ENCODE measurements at regions of chr3 and their contacts with region 1.

Region 1: DNA sequence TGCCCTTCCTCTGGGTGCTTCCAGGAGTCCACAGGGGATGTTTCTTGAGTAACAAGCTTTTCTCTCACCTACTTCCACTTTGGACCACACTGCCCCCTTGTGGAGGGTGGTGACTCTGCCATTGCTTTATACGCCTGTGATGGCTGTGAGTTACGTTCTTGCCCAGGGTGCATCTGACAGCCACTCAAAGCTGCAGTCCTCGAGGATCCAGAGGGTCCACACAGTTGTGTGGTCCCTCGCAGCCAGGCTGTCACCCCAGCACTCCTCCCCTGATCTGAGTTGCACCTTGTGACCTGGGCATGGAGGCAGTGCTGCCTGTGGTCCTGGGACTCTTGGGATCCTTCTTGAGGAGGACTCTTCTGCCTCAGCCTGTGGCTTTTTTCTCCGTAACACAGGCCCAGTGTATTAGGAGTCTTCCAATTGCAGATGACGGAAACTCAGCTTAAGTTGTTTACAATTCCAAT is 23.4 kb downstream of the FOXL2 start:
- DNase-seq: peak; percentile 83
- ATAC-seq: peak; percentile 77
- H3K4me3 ChIP-seq: no peak overlapping the region
- H3K27ac ChIP-seq: no peak overlapping the region
- H3K4me1 ChIP-seq: peaks cover 9% of the 10 kb centered on the region
- H3K27me3 ChIP-seq: peaks cover 5% of the 10 kb centered on the region; the same call in 1 of the 2 replicates
- CTCF ChIP-seq: peak; percentile 89
- POLR2A ChIP-seq: no peak
- RAD21 ChIP-seq: peak; percentile 80

Region 2: GRCh38 chr3:138329127-138329983 is 594.2 kb before region 1 on chr3 and contains the start of gene NME9:
- CTCF ChIA-PET with region 1: interaction called, 3 read pairs
- POLR2A ChIA-PET with region 1: no interaction called
- dilution Hi-C with region 1: no loop called
- in situ Hi-C with region 1: no loop called
- intact Hi-C with region 1: loop called (anchors 5 kb)
- DNase-seq: peak; percentile 73
- ATAC-seq: peak; percentile 97
- H3K4me3 ChIP-seq: peak within 1 kb of the TSS; percentile 62
- H3K27ac ChIP-seq: no peak within 1 kb of the TSS
- H3K4me1 ChIP-seq: no peaks in the 10 kb centered on the region
- H3K27me3 ChIP-seq: peaks cover under 1% of the 10 kb centered on the region
- CTCF ChIP-seq: peak; percentile 50
- POLR2A ChIP-seq: no peak
- RAD21 ChIP-seq: peak; percentile 36
- total RNA-seq, gene NME9: not detected in 2 replicates

Region 3: DNA sequence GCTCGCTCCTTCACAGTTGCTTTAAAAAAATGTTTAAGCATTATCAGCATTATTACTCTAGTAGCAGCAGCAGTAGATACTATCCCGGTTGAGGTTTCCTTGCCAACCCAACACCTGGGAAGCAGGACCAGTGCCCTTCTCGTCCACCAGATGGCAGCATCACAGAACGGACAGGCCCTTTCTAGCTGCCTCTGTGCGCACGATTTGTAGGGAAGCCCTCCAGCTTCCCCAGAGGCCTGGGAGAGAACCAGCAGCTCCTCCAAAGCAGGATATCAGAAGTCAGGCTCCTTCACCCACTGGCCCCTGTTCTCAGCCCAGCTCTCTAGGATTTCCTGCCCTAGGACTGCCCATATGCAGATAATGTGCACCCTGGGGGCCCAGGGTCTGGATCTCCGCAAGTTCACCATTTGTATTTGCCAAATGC is 506.0 kb before region 1 on chr3:
- CTCF ChIA-PET with region 1: interaction called, 6 read pairs
- POLR2A ChIA-PET with region 1: no interaction called
- dilution Hi-C with region 1: no loop called
- in situ Hi-C with region 1: no loop called
- intact Hi-C with region 1: loop called (anchors 1 kb)
- DNase-seq: peak; percentile 80
- ATAC-seq: peak; percentile 93
- H3K4me3 ChIP-seq: no peak overlapping the region
- H3K27ac ChIP-seq: no peak overlapping the region
- H3K4me1 ChIP-seq: peaks cover 8% of the 10 kb centered on the region
- H3K27me3 ChIP-seq: peaks cover 4% of the 10 kb centered on the region; the same call in 1 of the 2 replicates
- CTCF ChIP-seq: peak; percentile 92
- POLR2A ChIP-seq: no peak
- RAD21 ChIP-seq: peak; percentile 84

Region 4: GRCh38 chr3:138479438-138479863 is 444.1 kb before region 1 on chr3:
- CTCF ChIA-PET with region 1: interaction called, 9 read pairs
- POLR2A ChIA-PET with region 1: interaction called, 6 read pairs
- dilution Hi-C with region 1: no loop called
- in situ Hi-C with region 1: no loop called
- intact Hi-C with region 1: loop called (anchors 2 kb)
- DNase-seq: peak; percentile 46
- ATAC-seq: peak; percentile 79
- H3K4me3 ChIP-seq: no peak overlapping the region
- H3K27ac ChIP-seq: no peak overlapping the region
- H3K4me1 ChIP-seq: no peaks in the 10 kb centered on the region
- H3K27me3 ChIP-seq: no peaks in the 10 kb centered on the region
- CTCF ChIP-seq: peak; percentile 70
- POLR2A ChIP-seq: no peak
- RAD21 ChIP-seq: peak; percentile 72

Region 5: DNA sequence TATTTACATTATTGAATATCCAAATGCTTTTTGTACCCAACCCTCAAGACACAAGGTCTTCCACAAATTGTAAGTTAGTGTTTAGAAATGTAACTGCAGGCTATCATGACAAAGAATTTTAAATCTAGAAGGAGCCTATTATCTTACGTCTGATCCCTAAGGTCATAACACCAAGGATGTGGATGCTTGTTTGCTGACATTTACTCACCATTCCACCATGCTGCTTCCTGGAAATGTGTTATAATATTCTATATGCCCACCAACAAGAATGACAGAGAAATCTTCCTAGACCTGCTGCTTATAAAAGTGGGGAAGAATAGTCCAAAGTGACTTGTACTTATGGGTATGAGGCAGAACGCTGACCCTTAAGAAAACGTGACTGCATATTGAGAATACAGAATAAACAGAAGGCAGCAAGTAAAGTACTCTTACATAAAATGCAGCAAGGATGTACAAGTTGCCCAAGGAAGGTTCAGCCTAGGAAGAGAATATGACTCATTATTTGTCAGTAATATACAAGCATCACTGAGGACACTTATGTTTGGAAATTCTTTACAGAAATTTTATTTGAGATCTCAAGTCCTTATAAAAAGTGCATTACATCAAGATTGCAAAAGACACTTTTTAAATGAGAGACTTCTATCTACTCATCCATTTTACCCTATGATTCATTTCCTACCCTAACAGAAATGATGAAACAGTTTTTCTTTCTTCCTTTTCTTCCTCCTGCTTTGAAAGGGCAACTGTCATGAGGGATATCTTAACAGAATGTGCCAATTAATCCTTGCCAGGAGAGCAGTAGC is 429.6 kb before region 1 on chr3:
- CTCF ChIA-PET with region 1: no interaction called
- POLR2A ChIA-PET with region 1: no interaction called
- dilution Hi-C with region 1: no loop called
- in situ Hi-C with region 1: loop called (anchors 10 kb)
- intact Hi-C with region 1: no loop called
- DNase-seq: peak; percentile 87
- ATAC-seq: peak; percentile 91
- H3K4me3 ChIP-seq: no peak overlapping the region
- H3K27ac ChIP-seq: no peak overlapping the region
- H3K4me1 ChIP-seq: no peaks in the 10 kb centered on the region
- H3K27me3 ChIP-seq: no peaks in the 10 kb centered on the region
- CTCF ChIP-seq: no peak
- POLR2A ChIP-seq: no peak
- RAD21 ChIP-seq: no peak

Region 6: GRCh38 chr3:138935848-138936740 is 12.5 kb after region 1 on chr3:
- CTCF ChIA-PET with region 1: interaction called, 26 read pairs
- POLR2A ChIA-PET with region 1: interaction called, 4 read pairs
- dilution Hi-C with region 1: no loop called
- in situ Hi-C with region 1: no loop called
- intact Hi-C with region 1: no loop called
- DNase-seq: peak; percentile 29
- ATAC-seq: peak; percentile 93
- H3K4me3 ChIP-seq: peak overlapping the region; percentile 41
- H3K27ac ChIP-seq: no peak overlapping the region
- H3K4me1 ChIP-seq: peaks cover 4% of the 10 kb centered on the region; the same call in 1 of the 2 replicates
- H3K27me3 ChIP-seq: peaks cover 79% of the 10 kb centered on the region
- CTCF ChIP-seq: peak; percentile 74
- POLR2A ChIP-seq: no peak
- RAD21 ChIP-seq: peak; percentile 55